B cell (primary cell): ENCODE measurements at regions of chr1 and their contacts with region 1.

Region 1: DNA sequence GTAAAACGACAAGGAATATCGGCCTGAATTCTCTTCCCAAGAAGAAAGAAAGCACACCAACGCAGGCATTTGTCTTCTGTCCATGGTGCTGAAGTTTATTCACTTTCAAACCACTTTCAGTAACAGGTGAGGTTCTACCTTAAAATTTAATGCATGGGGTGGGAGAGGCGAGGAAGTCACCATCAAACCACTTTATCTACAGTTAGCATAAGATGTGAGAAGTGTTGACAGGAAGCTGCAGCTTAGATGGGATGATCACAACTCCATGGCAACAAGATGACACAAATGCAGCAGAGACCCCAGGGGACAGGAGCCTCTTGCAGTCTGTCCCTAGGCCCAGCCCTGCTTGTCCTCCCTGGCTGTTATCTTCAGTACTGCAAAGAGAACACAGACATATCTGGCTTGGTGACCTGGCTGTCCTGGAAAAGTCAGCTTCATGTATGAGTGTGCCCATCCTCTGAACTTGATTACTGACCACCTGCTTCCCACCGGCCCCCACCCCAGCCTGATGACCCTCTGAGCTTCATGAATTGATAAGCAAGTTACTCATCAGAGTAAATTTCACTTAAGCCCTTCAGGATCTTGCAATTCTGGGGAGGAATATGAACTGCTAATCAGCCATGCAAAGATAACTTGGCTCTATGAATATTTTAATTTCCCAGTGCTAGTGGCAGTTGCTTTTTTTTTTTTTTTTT is 1.8 kb downstream of the NPPA start:
- DNase-seq: peak; percentile 27
- ATAC-seq: peak; percentile 33
- H3K4me3 ChIP-seq: no peak overlapping the region
- H3K4me3 Mint-ChIP-seq: no peak overlapping the region
- H3K27ac ChIP-seq: no peak overlapping the region
- H3K27ac Mint-ChIP-seq: peak overlapping the region; percentile 41
- H3K4me1 ChIP-seq: peaks cover 14 to 22% of the 10 kb centered on the region in 2 donors
- H3K4me1 Mint-ChIP-seq: peaks cover 19% of the 10 kb centered on the region
- H3K27me3 ChIP-seq: no peaks in the 10 kb centered on the region
- H3K27me3 Mint-ChIP-seq: no peaks in the 10 kb centered on the region
- CTCF ChIP-seq: no peak

Region 2: DNA sequence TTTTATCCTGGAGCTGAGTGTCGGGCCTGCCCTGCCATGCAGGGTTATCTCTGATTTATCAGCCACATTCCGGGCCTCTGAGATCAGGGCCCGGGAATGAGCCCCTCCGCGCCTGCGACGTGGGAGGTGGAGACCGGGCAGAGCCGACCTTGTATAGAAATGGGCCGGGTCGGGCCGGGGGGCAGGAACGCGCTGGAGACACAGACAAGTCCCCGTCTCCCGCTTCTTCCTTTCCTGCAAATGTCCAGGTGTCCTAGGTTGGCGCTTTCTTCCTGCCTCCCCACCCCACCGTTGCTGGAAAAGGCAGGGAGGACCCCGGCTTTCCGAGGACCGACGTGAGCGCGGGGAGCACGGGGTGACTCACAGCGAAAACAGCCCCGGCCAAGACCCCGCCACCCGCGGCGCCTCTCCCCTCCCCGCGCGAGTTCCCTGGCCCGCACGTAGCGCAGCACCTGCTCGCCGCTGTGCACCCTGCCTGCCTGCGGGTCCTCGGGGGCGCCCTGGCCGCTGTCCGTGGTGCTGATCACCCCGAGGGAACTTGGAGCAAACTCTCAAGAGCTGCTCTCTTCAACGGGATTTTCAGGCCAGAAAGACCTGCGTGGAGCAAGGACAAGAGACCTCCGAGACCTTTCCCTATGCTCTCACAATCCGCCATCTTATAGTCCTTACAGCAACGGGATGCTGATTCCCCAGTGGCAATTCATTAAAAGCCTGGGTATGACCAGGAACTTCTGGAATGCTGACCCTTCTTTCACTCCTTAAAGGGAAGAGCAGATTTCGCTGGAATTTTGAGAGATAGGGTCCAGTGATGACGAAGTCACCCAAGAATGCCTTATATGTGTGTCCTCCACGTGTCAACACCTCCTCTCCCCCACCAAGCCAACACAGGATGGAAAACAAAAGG is 13.4 kb after region 1 on chr1:
- CTCF ChIA-PET with region 1: interaction called, 3 read pairs
- POLR2A ChIA-PET with region 1: no interaction called
- intact Hi-C with region 1: loop called (anchors 2 kb)
- DNase-seq: peak; percentile 76
- ATAC-seq: peak; percentile 77
- H3K4me3 ChIP-seq: no peak overlapping the region
- H3K4me3 Mint-ChIP-seq: no peak overlapping the region
- H3K27ac ChIP-seq: no peak overlapping the region
- H3K27ac Mint-ChIP-seq: no peak overlapping the region
- H3K4me1 ChIP-seq: peaks cover 0 to 10% of the 10 kb centered on the region in 2 donors
- H3K4me1 Mint-ChIP-seq: no peaks in the 10 kb centered on the region
- H3K27me3 ChIP-seq: peaks cover 0 to 66% (median 17%) of the 10 kb centered on the region in 4 experiments
- H3K27me3 Mint-ChIP-seq: peaks cover 42% of the 10 kb centered on the region
- CTCF ChIP-seq: peak; percentile 6

Region 3: GRCh38 chr1:11929849-11930248 is 84.1 kb after region 1 on chr1:
- CTCF ChIA-PET with region 1: no interaction called
- POLR2A ChIA-PET with region 1: no interaction called
- intact Hi-C with region 1: no loop called
- DNase-seq: no peak
- ATAC-seq: no peak
- H3K4me3 ChIP-seq: no peak overlapping the region
- H3K4me3 Mint-ChIP-seq: no peak overlapping the region
- H3K27ac ChIP-seq: no peak overlapping the region
- H3K27ac Mint-ChIP-seq: no peak overlapping the region
- H3K4me1 ChIP-seq: peaks cover 8 to 18% of the 10 kb centered on the region in 2 donors
- H3K4me1 Mint-ChIP-seq: peaks cover 15% of the 10 kb centered on the region
- H3K27me3 ChIP-seq: no peaks in the 10 kb centered on the region
- H3K27me3 Mint-ChIP-seq: no peaks in the 10 kb centered on the region
- CTCF ChIP-seq: no peak

Region 4: DNA sequence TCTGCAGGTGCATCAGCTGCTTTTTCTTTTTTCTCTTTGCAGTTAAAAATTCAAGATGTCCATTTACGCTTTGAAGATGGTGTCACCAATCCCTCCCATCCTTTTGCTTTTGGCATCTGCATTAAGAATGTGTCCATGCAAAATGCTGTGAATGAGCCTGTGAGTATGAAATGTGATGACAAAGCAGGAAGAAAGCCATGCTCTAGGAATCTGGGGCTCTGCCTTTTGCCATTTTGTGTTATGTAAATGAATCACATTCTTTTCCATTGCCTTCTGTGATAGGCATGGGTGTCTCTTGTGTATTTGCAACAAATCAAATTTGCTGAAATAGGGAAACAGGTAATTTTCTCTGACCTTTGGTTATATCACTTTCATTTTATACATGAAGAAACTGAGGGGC is 403.4 kb after region 1 on chr1:
- CTCF ChIA-PET with region 1: no interaction called
- POLR2A ChIA-PET with region 1: no interaction called
- intact Hi-C with region 1: no loop called
- DNase-seq: no peak
- ATAC-seq: no peak
- H3K4me3 ChIP-seq: no peak overlapping the region
- H3K4me3 Mint-ChIP-seq: no peak overlapping the region
- H3K27ac ChIP-seq: no peak overlapping the region
- H3K27ac Mint-ChIP-seq: no peak overlapping the region
- H3K4me1 ChIP-seq: no peaks in the 10 kb centered on the region
- H3K4me1 Mint-ChIP-seq: no peaks in the 10 kb centered on the region
- H3K27me3 ChIP-seq: no peaks in the 10 kb centered on the region
- H3K27me3 Mint-ChIP-seq: no peaks in the 10 kb centered on the region
- CTCF ChIP-seq: no peak